ENCODE measurements at regions of chr7 and their contacts with region 1.

Region 1: DNA sequence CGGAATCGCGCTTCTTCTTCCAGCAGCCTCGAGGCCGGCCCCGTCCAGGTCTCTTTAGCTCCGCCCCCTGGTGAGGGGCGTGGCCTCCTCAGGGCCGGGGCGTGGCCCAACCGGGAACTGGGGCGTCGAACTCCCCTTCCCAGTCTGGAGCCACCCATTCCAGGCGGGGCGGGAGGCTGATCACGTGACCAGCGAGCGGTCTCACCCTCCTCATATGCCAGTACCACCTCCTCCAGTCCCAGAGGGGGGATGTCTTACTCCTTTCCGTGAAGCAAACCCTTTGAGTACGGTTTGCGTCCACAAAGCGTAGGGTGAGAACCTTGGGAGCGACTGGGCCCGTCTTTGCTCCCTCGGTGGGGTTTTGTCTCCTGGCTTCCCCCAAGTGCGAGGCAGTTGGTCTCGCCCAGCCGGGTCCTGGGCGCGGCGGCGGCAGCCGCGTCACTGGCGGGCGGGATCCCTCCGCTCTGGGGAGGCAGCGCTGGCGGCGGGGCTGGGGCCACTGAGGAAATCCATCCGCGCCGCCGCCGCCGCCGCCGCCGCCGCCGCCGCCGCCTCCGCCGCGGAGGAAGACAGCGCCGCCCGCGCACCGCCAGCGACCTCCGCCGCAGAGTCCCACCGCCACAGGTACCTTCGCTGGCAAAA is at the start of gene GNB2:
- DNase-seq: peak; percentile 99 to 100
- H3K4me3 ChIP-seq: peak within 1 kb of the TSS; percentile 98 to 99
- H3K27ac ChIP-seq: peak within 1 kb of the TSS; percentile 99 to 100
- H3K4me1 ChIP-seq: peaks cover 0 to 24% (median 11%) of the 10 kb centered on the region in 4 donors
- H3K27me3 ChIP-seq: no peaks in the 10 kb centered on the region
- CTCF ChIP-seq: peak in 1 of 2 experiments; percentile 26

Region 2: DNA sequence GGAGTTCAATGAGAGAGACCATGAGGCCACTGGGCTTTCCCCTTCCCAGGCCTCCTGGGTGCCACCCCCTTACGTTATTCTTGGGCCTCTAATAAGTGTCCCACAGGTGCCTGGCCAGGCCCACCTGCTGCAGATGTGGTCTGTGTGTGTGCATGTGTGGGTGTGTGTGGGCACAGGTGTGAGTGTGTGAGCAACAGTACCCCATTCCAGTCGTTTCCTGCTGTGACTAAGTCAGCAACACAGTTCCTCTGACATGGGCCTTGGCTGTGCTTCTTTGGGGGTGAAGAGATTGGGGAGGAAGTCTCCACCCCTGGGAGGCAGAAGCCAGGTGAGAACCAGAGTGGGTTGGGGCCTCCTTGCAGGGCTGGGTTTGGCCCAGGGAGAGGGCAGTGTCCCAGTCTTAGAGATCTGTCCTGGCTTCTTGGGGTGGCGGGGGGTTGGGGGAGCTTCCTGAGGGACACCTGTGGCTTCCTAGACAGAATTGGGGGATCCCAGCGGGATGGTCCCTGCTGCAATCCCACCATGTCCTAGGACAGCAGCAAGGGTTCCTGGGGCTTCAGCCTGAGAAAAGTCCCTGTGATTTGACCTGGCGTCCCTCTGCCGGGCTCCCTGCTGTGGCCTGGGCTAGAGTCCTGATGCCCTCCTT is 319.6 kb before region 1 on chr7:
- intact Hi-C with region 1: no loop called
- DNase-seq: no peak
- H3K4me3 ChIP-seq: no peak overlapping the region
- H3K27ac ChIP-seq: no peak overlapping the region
- H3K4me1 ChIP-seq: no peaks in the 10 kb centered on the region
- H3K27me3 ChIP-seq: no peaks in the 10 kb centered on the region
- CTCF ChIP-seq: no peak

Region 3: GRCh38 chr7:100478966-100479665 is 194.3 kb before region 1 on chr7 and contains the start of gene TSC22D4:
- intact Hi-C with region 1: loop called (anchors 10 kb)
- DNase-seq: peak; percentile 96 to 98
- H3K4me3 ChIP-seq: peak within 1 kb of the TSS; percentile 65 to 98
- H3K27ac ChIP-seq: peak within 1 kb of the TSS; percentile 84 to 95
- H3K4me1 ChIP-seq: peaks cover 0 to 62% (median 46%) of the 10 kb centered on the region in 4 donors
- H3K27me3 ChIP-seq: no peaks in the 10 kb centered on the region
- CTCF ChIP-seq: peak in 1 of 2 experiments; percentile 4

Region 4: GRCh38 chr7:100538654-100539435 is 134.6 kb before region 1 on chr7 and contains the start of gene AGFG2:
- intact Hi-C with region 1: no loop called
- DNase-seq: peak; percentile 100
- H3K4me3 ChIP-seq: peak within 1 kb of the TSS; percentile 60 to 90
- H3K27ac ChIP-seq: peak within 1 kb of the TSS; percentile 75 to 78
- H3K4me1 ChIP-seq: peaks cover 0 to 29% (median 21%) of the 10 kb centered on the region in 4 donors
- H3K27me3 ChIP-seq: no peaks in the 10 kb centered on the region
- CTCF ChIP-seq: peak in 1 of 2 experiments; percentile 12

Region 5: GRCh38 chr7:100586266-100587025 is 87.0 kb before region 1 on chr7 and contains the start of gene FBXO24:
- intact Hi-C with region 1: loop called (anchors 5 kb)
- DNase-seq: peak; percentile 99 to 100
- H3K4me3 ChIP-seq: peak within 1 kb of the TSS; percentile 82 to 84
- H3K27ac ChIP-seq: peak within 1 kb of the TSS; percentile 89 to 90
- H3K4me1 ChIP-seq: peaks cover 0 to 46% (median 29%) of the 10 kb centered on the region in 4 donors
- H3K27me3 ChIP-seq: peaks cover 0 to 13% of the 10 kb centered on the region in 2 donors
- CTCF ChIP-seq: no peak

Region 6: GRCh38 chr7:100745184-100745583 is 71.8 kb after region 1 on chr7:
- intact Hi-C with region 1: no loop called
- DNase-seq: peak in 1 of 2 donors; percentile 36
- H3K4me3 ChIP-seq: peak overlapping the region; percentile 21 to 42
- H3K27ac ChIP-seq: no peak overlapping the region
- H3K4me1 ChIP-seq: no peaks in the 10 kb centered on the region
- H3K27me3 ChIP-seq: peaks cover 0 to 59% of the 10 kb centered on the region in 2 donors
- CTCF ChIP-seq: no peak

Region 7: DNA sequence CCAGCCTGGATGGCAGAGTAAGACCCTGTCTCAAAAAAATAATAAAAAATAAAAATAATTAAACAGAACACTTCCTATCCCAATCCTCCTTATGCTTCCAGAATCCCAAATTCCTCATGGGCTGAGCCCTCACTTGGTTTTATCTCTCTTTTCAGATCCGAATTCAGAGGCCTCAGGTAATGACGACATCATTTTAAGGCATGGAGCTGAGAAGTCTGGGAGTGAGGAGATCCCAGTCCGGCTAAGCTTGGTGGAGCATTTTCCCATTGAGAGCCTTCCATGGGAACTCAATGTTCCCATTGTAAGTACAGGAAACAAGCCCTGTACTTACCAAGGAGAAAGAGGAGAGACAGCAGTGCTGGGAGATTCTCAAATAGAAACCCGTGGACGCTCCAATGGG is 384.4 kb after region 1 on chr7:
- intact Hi-C with region 1: no loop called
- DNase-seq: no peak
- H3K4me3 ChIP-seq: no peak overlapping the region
- H3K27ac ChIP-seq: no peak overlapping the region
- H3K4me1 ChIP-seq: no peaks in the 10 kb centered on the region
- H3K27me3 ChIP-seq: peaks cover 0 to 46% of the 10 kb centered on the region in 2 donors
- CTCF ChIP-seq: no peak